ENCODE measurements at regions of chr2 and their contacts with region 1.

Region 1: GRCh38 chr2:200985799-200986198 is 22.3 kb upstream of the ORC2 start:
- DNase-seq: no peak
- ATAC-seq: no peak
- H3K4me3 ChIP-seq: no peak overlapping the region
- H3K4me3 Mint-ChIP-seq: no peak overlapping the region
- H3K27ac ChIP-seq: no peak overlapping the region
- H3K27ac Mint-ChIP-seq: peak overlapping the region in 1 of 9 donors; percentile 11
- H3K4me1 ChIP-seq: no peaks in the 10 kb centered on the region
- H3K4me1 Mint-ChIP-seq: peaks cover 0 to 2% (median 0%) of the 10 kb centered on the region in 7 donors
- H3K27me3 ChIP-seq: no peaks in the 10 kb centered on the region
- H3K27me3 Mint-ChIP-seq: no peaks in the 10 kb centered on the region

Region 2: GRCh38 chr2:201040867-201041628 is 55.2 kb after region 1 on chr2:
- CTCF ChIA-PET with region 1: no interaction called
- POLR2A ChIA-PET with region 1: no interaction called
- intact Hi-C with region 1: loop called in 1 of 2 experiments (anchors 10 kb)
- DNase-seq: no peak
- ATAC-seq: no peak
- H3K4me3 ChIP-seq: no peak overlapping the region
- H3K4me3 Mint-ChIP-seq: no peak overlapping the region
- H3K27ac ChIP-seq: no peak overlapping the region
- H3K27ac Mint-ChIP-seq: peak overlapping the region in 2 of 9 donors; percentile 1 to 60
- H3K4me1 ChIP-seq: no peaks in the 10 kb centered on the region
- H3K4me1 Mint-ChIP-seq: peaks cover 3 to 16% (median 9%) of the 10 kb centered on the region in 7 donors
- H3K27me3 ChIP-seq: no peaks in the 10 kb centered on the region
- H3K27me3 Mint-ChIP-seq: no peaks in the 10 kb centered on the region

Region 3: DNA sequence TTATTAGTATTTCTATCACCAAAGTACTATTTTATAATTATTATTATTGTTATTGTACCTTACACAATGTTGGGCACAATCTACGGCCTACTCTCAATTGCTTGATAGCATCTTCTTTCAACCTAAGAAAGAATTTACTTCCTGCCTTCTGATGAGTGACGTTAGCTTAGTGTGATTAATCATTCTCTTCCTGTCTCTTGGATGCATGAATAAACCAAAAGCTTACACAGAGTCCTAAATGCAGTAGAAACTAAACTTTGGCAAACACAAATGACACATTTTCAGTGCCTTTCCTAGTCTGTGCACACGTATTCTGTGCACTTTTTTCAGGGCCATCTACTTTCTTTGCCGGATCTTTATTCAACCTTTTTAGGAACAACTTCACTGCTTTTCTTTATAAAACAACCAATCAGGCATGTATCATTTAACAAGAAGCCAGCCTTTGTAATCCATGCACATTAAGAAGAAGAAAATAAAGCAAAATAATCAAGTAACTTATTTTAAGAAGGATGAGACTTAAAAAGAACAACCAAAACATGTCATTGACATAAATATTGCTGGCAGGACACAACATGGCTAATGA is 446.3 kb after region 1 on chr2:
- CTCF ChIA-PET with region 1: no interaction called
- POLR2A ChIA-PET with region 1: no interaction called
- intact Hi-C with region 1: no loop called
- DNase-seq: peak in 7 of 9 donors; percentile 21 to 60 (median 39)
- ATAC-seq: peak; percentile 84
- H3K4me3 ChIP-seq: no peak overlapping the region
- H3K4me3 Mint-ChIP-seq: peak overlapping the region in 9 of 10 donors; percentile 14 to 76 (median 54)
- H3K27ac ChIP-seq: peak overlapping the region; percentile 38
- H3K27ac Mint-ChIP-seq: peak overlapping the region; percentile 65 to 94 (median 91)
- H3K4me1 ChIP-seq: peaks cover 20 to 23% of the 10 kb centered on the region in 2 donors
- H3K4me1 Mint-ChIP-seq: peaks cover 24 to 75% (median 66%) of the 10 kb centered on the region in 7 donors
- H3K27me3 ChIP-seq: no peaks in the 10 kb centered on the region
- H3K27me3 Mint-ChIP-seq: no peaks in the 10 kb centered on the region

Measured in naive thymus-derived CD4-positive, alpha-beta T cell (primary cell).